Activated CD4-positive, alpha-beta T cell treated with anti-CD3 and anti-CD28 coated beads, Interleukin-2, amount 10 ng/mL, durations not matched to agents 24 days and 14 days (primary cell): ENCODE measurements at regions of chr1 and their contacts with region 1.

Region 1: GRCh38 chr1:23916209-23917131 is 3.3 kb upstream of the CNR2 start:
- DNase-seq: peak; percentile 87
- H3K4me3 Mint-ChIP-seq: no peak overlapping the region
- H3K27ac Mint-ChIP-seq: no peak overlapping the region
- H3K4me1 Mint-ChIP-seq: peaks cover 15% of the 10 kb centered on the region
- H3K27me3 Mint-ChIP-seq: no peaks in the 10 kb centered on the region

Region 2: GRCh38 chr1:23772049-23772853 is 144.2 kb before region 1 on chr1:
- intact Hi-C with region 1: loop called (anchors 1 kb)
- DNase-seq: peak; percentile 96
- H3K4me3 Mint-ChIP-seq: no peak overlapping the region
- H3K27ac Mint-ChIP-seq: no peak overlapping the region
- H3K4me1 Mint-ChIP-seq: peaks cover 12% of the 10 kb centered on the region
- H3K27me3 Mint-ChIP-seq: no peaks in the 10 kb centered on the region

Region 3: DNA sequence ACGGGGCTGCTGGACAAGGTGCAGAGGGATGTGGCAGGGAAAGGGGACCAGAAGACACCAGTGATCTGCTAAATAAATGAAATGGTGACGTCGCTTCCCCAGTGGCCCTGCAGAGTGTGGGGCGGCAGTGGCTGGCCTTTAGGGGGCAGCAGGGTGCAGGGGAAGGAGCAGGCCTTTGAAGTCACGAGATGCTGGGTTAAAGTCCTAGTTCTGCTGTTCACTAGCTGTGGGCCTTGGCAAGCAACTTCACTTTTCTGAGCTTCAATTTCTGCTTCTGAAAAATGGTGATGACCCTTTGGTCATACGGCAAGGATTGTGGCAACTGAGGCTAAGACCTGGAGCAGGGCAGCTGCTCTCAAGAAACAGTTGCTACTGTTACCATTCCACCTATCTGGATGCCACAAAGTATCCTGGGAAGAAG is 106.7 kb before region 1 on chr1:
- intact Hi-C with region 1: loop called (anchors 2 kb)
- DNase-seq: peak; percentile 94
- H3K4me3 Mint-ChIP-seq: no peak overlapping the region
- H3K27ac Mint-ChIP-seq: no peak overlapping the region
- H3K4me1 Mint-ChIP-seq: peaks cover 13% of the 10 kb centered on the region
- H3K27me3 Mint-ChIP-seq: no peaks in the 10 kb centered on the region